ENCODE measurements at regions of chr7 and their contacts with region 1.

Region 1: GRCh38 chr7:25093268-25093826 is 31.7 kb downstream of the CYCS start:
- DNase-seq: peak; percentile 86
- ATAC-seq: peak; percentile 90
- H3K4me3 Mint-ChIP-seq: no peak overlapping the region
- H3K27ac Mint-ChIP-seq: no peak overlapping the region
- H3K4me1 Mint-ChIP-seq: peaks cover 13% of the 10 kb centered on the region
- H3K27me3 Mint-ChIP-seq: peaks cover 15% of the 10 kb centered on the region

Region 2: DNA sequence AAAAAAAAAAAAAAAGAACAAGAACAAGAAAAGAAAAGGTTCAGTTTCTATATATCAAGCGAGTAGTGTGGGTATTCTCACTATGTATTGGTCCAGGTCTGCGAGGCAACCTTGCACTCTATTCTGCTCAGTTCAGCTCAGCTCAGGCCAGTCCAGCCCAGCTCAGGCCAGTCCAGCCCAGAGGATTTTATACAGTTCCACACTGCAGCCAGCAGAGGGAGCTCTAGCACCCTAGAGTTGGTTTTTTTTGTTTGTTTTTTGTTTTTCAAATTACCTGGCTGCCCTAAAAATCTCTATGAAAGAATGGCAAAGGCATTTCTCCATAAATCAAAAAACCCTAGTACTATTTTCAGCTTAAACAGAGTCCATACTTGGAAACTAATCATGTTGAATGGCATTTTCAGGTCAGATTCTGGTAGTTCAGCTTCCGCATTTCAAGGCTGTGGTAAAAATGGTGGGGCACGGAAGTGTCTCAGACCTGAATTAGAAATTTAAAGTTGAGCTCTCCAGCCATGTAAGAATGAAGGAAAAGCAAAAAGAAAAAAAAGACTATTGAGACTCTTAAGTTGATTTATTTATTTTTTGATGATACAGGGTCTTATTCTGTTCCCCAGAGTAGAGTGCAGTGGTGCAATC is 280.9 kb before region 1 on chr7:
- CTCF ChIA-PET with region 1: interaction called, 92 read pairs
- DNase-seq: peak; percentile 61
- ATAC-seq: peak; percentile 68
- H3K4me3 Mint-ChIP-seq: no peak overlapping the region
- H3K27ac Mint-ChIP-seq: peak overlapping the region; percentile 18
- H3K4me1 Mint-ChIP-seq: no peaks in the 10 kb centered on the region
- H3K27me3 Mint-ChIP-seq: no peaks in the 10 kb centered on the region

Region 3: GRCh38 chr7:24825931-24826661 is 267.3 kb before region 1 on chr7:
- CTCF ChIA-PET with region 1: interaction called, 29 read pairs
- DNase-seq: peak; percentile 47
- ATAC-seq: peak; percentile 14
- H3K4me3 Mint-ChIP-seq: peak overlapping the region; percentile 55
- H3K27ac Mint-ChIP-seq: peak overlapping the region; percentile 89
- H3K4me1 Mint-ChIP-seq: peaks cover 85% of the 10 kb centered on the region
- H3K27me3 Mint-ChIP-seq: no peaks in the 10 kb centered on the region

Region 4: DNA sequence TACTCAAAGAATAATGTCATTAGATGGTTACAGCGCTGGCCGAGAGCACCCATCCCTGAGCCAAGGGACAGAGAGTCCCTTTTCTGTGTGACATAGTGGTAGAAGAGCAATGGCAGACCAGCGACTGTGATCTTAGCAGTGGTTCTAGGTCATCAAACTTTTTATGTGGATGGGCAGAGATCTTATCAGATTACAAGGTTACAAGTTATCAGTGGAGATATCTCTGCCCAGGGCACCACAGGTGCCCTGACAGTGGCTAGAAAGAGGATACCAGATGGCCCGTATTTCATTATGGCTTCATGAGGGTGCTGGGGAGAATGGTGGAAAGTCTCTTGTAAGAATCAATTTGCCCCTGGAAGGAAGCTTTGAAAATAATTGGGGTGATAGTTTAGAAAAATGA is 31.0 kb before region 1 on chr7:
- CTCF ChIA-PET with region 1: interaction called, 10 read pairs
- DNase-seq: no peak
- ATAC-seq: no peak
- H3K4me3 Mint-ChIP-seq: no peak overlapping the region
- H3K27ac Mint-ChIP-seq: no peak overlapping the region
- H3K4me1 Mint-ChIP-seq: no peaks in the 10 kb centered on the region
- H3K27me3 Mint-ChIP-seq: peaks cover 4% of the 10 kb centered on the region

Region 5: GRCh38 chr7:25083201-25083600 is 10.1 kb before region 1 on chr7:
- CTCF ChIA-PET with region 1: interaction called, 37 read pairs
- DNase-seq: no peak
- ATAC-seq: no peak
- H3K4me3 Mint-ChIP-seq: no peak overlapping the region
- H3K27ac Mint-ChIP-seq: no peak overlapping the region
- H3K4me1 Mint-ChIP-seq: no peaks in the 10 kb centered on the region
- H3K27me3 Mint-ChIP-seq: peaks cover 19% of the 10 kb centered on the region

Region 6: DNA sequence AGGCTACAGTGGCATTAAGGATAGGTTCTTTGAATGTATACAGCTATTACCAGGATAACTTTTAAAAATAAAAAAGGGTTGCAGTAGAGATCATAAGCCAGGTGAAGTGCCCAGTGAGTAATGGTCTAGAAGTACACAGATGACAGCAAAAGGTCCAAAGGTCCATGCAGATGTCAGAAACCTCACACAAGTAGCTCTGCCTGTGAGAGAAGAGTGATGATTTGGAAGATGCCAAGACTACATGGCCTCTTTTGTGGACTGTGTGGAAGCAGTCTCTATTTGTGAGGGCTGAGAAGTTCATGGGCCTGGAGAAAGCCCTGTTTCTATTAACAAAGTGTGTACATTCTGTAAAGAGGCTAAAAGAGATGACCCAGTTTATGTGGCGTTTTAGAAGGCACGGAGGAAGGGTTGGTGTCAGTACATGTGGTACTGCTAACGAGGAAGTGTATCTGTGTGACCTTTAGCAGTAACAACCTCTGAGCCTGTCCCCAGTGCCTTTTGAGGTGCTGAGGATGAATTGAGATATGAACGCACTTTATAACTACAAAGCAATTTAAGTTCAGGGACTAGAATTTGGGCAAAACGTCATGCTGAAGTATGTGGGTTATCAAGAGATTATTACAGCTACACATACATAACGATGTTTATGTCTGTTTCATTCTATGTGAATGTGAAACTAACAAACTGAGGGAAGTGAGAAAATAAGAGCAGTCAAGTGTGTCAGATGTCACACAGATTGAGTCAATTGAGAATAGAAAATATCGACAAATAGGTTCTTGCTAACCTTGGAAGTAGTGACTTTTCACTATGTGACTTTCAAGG is 24.1 kb after region 1 on chr7:
- CTCF ChIA-PET with region 1: interaction called, 12 read pairs
- DNase-seq: no peak
- ATAC-seq: peak; percentile 51
- H3K4me3 Mint-ChIP-seq: peak overlapping the region; percentile 17
- H3K27ac Mint-ChIP-seq: peak overlapping the region; percentile 76
- H3K4me1 Mint-ChIP-seq: peaks cover 36% of the 10 kb centered on the region
- H3K27me3 Mint-ChIP-seq: no peaks in the 10 kb centered on the region